GM13977 (cell line): ENCODE measurements at regions of chr16 and their contacts with region 1.

Region 1: GRCh38 chr16:77971306-77972271 is 50.8 kb upstream of the CLEC3A start:
- DNase-seq: peak; percentile 63
- CTCF ChIP-seq: peak; percentile 88

Region 2: GRCh38 chr16:77660311-77660710 is 311.3 kb before region 1 on chr16:
- in situ Hi-C with region 1: loop called (anchors 10 kb)
- DNase-seq: no peak
- CTCF ChIP-seq: no peak